HepG2 (cell line): ENCODE measurements at regions of chr2 and their contacts with region 1.

Region 1: DNA sequence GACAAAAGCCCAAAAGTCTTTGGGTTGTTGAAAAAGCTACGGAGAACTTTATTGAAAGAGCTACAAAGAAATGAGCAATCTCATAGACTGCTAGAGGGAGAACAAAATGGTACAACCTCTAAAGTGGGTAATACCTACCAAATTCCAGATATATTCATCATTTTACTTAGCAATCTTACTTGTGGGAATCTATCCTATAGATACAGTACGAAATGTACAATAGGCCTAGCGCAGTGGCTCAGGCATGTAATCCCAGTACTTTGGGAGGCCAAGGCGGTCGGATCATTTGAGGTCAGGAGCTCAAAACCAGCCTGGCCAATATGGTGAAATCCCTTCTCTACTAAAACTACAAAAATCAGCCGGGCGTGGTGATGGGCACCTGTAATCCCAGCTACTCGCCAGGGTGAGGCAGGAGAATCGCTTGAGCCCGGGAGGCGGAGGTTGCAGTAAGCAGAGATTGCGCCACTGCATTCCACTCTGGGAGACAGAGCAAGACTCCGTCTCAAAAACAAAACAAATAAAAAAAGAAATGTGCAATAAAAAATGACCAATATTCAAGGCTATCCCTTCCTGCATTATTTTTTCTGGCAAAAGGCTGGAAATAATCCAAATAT is 10.1 kb downstream of the EXOC6B start:
- DNase-seq: peak; percentile 83
- ATAC-seq: peak; percentile 80
- H3K4me3 ChIP-seq: no peak overlapping the region
- H3K27ac ChIP-seq: no peak overlapping the region
- H3K4me1 ChIP-seq: peaks cover 8% of the 10 kb centered on the region; the same call in 1 of the 2 replicates
- H3K27me3 ChIP-seq: no peaks in the 10 kb centered on the region
- CTCF ChIP-seq: peak; percentile 73
- EP300 ChIP-seq: 0 out of 4 replicates have a peak, but pooled peaks of 1 of the 2 experiments have one; percentile 27
- POLR2A ChIP-seq: no peak
- RAD21 ChIP-seq: peak; percentile 80

Region 2: DNA sequence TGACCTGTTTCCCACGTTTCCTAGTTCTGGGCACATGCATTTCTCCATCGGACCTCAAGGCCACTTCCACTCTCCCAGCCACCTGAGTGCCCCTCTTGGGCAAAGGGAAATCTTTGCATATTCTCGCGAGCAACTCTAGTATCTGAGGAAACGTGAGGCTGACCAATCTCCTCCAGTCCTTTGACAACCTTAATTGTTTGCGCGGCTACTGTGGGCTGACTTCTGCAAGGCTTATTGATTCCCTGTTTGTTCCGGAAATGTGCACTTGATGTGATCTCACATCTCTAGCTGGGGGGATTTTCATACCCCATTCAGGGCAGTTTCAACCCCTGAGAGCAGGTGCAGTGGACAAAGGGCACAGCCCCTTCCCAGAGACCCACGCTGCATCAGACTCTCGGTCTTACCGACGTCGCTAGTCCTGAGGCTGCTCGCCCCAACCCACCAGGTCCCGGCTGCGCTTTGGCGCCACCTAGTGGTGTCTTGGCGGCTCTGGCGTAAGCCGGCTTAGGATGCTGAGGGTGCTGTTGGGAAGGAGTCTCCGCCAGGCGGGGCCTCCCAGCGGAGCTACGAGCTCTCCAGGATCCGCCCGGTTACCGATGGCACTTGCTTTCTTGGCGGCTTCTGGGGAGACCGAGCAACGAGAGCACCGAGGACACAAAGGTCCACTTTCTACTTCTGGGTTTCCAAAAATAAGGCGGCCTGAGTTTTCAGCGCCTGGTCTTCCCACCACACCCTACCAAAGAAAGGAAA is 46.7 kb after region 1 on chr2:
- CTCF ChIA-PET with region 1: interaction called, 12 read pairs
- POLR2A ChIA-PET with region 1: interaction called, 3 read pairs
- in situ Hi-C with region 1: no loop called
- intact Hi-C with region 1: loop called (anchors 1 kb)
- DNase-seq: peak; percentile 82
- ATAC-seq: peak; percentile 99
- H3K4me3 ChIP-seq: peak overlapping the region; percentile 31 to 60 (median 51)
- H3K27ac ChIP-seq: no peak overlapping the region
- H3K4me1 ChIP-seq: peaks cover 12% of the 10 kb centered on the region
- H3K27me3 ChIP-seq: peaks cover 0 to 30% of the 10 kb centered on the region in 2 experiments; a peak in 3 of 5 replicates
- CTCF ChIP-seq: peak; percentile 100
- EP300 ChIP-seq: no peak; a peak in 1 of 4 replicates
- POLR2A ChIP-seq: no peak
- RAD21 ChIP-seq: peak; percentile 94